Esophagus muscularis mucosa (tissue), 4 donors: ENCODE measurements at regions of chr11 and their contacts with region 1.

Region 1: GRCh38 chr11:17978553-17979287 is 34.1 kb downstream of the SERGEF start:
- DNase-seq: no peak
- H3K4me3 ChIP-seq: no peak overlapping the region
- H3K27ac ChIP-seq: no peak overlapping the region
- H3K4me1 ChIP-seq: peaks cover 0 to 16% (median 2%) of the 10 kb centered on the region in 4 donors
- H3K27me3 ChIP-seq: no peaks in the 10 kb centered on the region
- CTCF ChIP-seq: peak; percentile 42 to 61 (median 46)
- EP300 ChIP-seq: no peak
- POLR2A ChIP-seq: no peak

Region 2: DNA sequence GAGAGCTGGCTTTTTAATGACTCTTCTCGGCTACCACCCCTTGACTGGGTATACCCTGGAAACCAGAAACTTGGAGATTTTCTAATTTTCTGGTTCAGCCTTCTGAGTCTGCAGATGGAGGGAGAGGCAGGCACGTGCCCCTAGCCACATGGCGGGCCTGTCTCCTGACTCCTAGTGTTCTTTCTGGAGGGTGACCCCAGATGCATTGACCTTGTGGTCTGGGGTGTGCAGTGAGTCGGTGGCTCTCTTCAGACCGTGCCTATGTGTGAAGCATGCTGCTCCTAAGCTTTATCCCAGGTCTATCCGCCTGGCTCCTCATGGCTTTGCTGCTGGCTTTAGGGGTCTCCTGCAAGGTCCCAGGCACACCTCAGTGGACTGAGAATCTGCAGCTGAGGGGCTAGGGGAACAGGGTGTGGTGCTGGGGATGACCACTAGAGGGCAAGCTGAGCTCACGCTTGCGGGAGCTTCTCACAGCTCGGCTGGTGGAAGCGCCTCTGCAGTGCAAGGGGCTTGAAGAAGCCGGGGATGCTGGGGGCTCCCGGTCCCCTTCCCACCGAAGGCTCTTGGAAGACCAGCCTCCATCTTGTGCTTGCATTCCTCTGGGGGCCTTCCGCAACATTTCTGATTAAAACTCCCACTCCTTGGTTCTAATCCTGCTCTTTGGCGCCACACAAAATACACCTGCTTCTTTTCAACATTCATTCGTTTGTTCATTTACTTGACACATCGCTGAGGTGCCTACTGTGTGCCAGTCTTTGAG is 379.8 kb before region 1 on chr11:
- intact Hi-C with region 1: loop called (anchors 5 kb)
- DNase-seq: peak; percentile 92
- H3K4me3 ChIP-seq: no peak overlapping the region
- H3K27ac ChIP-seq: no peak overlapping the region
- H3K4me1 ChIP-seq: no peaks in the 10 kb centered on the region
- H3K27me3 ChIP-seq: peaks cover 0 to 25% (median 0%) of the 10 kb centered on the region in 4 donors
- CTCF ChIP-seq: peak; percentile 79 to 97 (median 82)
- EP300 ChIP-seq: no peak
- POLR2A ChIP-seq: no peak

Region 3: DNA sequence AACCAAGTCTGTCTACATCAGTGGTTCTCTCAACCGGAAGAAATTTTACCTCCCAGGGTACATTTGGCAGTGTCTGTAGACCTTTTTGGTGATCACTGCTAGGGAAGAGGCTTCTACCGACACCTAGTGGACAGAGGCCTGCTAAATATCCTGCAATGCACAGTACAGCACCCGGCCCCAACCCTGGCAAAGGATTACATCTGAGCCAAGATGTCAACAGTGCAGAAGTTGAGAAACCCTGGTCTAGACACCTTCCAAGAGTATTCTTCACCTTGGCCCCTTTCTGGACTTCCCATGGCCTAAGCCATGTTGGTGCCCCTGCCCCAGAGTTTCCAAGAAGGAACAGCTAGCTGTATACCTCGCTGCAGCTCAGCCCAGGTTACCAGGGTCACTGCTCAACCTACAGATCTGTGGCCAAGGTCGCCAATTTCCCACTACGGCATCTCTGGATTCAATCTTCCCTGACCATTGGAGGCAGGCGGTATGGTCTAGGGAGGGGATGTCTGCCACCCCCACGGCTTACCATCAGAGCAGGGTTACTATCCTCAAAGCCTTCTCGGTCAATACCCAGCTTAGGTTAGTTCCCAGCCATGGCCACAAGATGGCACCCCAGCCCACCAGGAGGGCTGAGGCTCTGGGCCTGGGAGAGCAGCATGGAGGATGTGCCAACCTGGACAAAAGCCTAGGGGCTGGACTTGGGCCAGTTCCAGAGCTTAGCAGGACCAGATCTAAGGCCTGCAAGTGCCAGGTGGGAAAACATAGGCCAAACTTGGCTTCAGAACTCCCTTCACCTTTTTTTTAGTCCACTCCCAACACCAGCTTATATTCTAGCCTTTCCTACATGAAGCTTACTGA is 247.9 kb before region 1 on chr11:
- intact Hi-C with region 1: loop called (anchors 2 kb)
- DNase-seq: no peak
- H3K4me3 ChIP-seq: no peak overlapping the region
- H3K27ac ChIP-seq: no peak overlapping the region
- H3K4me1 ChIP-seq: peaks cover 10 to 29% (median 24%) of the 10 kb centered on the region in 4 donors
- H3K27me3 ChIP-seq: peaks cover 0 to 58% (median 3%) of the 10 kb centered on the region in 4 donors
- CTCF ChIP-seq: peak; percentile 76 to 87 (median 82)
- EP300 ChIP-seq: no peak
- POLR2A ChIP-seq: no peak

Region 4: GRCh38 chr11:17760102-17761029 is 218.4 kb before region 1 on chr11:
- intact Hi-C with region 1: loop called (anchors 10 kb)
- DNase-seq: no peak
- H3K4me3 ChIP-seq: no peak overlapping the region
- H3K27ac ChIP-seq: no peak overlapping the region
- H3K4me1 ChIP-seq: no peaks in the 10 kb centered on the region
- H3K27me3 ChIP-seq: peaks cover 0 to 7% (median 0%) of the 10 kb centered on the region in 4 donors
- CTCF ChIP-seq: peak; percentile 45 to 57 (median 55)
- EP300 ChIP-seq: no peak
- POLR2A ChIP-seq: no peak